ENCODE measurements at regions of chr1 and their contacts with region 1.

Region 1: GRCh38 chr1:209207701-209208286 is 375.7 kb upstream of the CAMK1G start:
- DNase-seq: peak; percentile 45
- ATAC-seq: peak; percentile 97
- H3K4me3 ChIP-seq: no peak overlapping the region
- H3K27ac ChIP-seq: no peak overlapping the region
- H3K4me1 ChIP-seq: no peaks in the 10 kb centered on the region
- H3K27me3 ChIP-seq: peaks cover 13% of the 10 kb centered on the region
- CTCF ChIP-seq: peak; percentile 65
- POLR2A ChIP-seq: no peak
- RAD21 ChIP-seq: peak; percentile 57

Region 2: DNA sequence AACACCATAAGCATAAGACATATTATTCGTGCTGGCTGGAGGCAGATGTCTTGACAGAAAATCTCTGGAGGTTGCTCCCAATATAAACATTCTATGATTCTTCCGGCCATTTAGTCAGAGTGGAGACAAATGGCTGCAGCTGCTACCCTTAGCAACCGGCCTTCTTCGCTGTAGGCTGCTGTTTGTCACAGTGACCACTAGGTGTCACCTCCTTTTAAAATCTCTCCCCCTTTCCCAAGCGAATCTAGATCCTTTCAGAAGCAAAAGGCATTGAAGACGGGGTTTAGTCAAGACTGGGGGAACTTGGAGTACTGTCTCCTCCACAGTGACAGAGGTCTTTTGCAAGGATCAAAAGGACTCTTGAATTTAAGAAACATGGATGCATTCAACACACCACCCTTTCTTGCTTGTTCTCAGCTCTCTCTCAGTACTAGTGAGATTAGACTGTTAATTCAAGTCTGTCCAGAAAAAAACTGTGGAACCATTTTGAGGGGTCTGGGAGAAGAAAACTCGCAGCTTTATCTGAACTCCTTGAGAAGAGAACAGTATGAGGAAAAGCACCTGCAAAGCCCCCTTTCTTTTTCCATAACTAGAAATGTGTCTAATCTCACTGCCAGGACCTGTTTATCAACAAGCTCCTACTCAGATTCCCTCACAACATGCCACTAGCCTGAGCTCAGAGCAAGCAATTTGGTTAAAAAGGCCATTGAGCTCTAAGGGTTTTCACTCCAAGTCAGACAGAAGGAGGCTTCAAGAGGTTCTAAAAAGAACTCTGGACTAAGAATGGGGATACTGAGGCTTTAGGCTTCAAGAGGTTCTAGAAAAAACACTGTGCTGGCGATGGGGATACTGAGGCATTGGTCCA is 555.3 kb before region 1 on chr1:
- CTCF ChIA-PET with region 1: interaction called, 11 read pairs
- POLR2A ChIA-PET with region 1: no interaction called
- dilution Hi-C with region 1: no loop called
- in situ Hi-C with region 1: no loop called
- intact Hi-C with region 1: loop called (anchors 2 kb)
- DNase-seq: peak; percentile 66
- ATAC-seq: peak; percentile 96
- H3K4me3 ChIP-seq: no peak overlapping the region
- H3K27ac ChIP-seq: no peak overlapping the region
- H3K4me1 ChIP-seq: no peaks in the 10 kb centered on the region
- H3K27me3 ChIP-seq: no peaks in the 10 kb centered on the region
- CTCF ChIP-seq: peak; percentile 73
- POLR2A ChIP-seq: no peak
- RAD21 ChIP-seq: peak; percentile 35; the same call in 1 of the 2 replicates

Region 3: DNA sequence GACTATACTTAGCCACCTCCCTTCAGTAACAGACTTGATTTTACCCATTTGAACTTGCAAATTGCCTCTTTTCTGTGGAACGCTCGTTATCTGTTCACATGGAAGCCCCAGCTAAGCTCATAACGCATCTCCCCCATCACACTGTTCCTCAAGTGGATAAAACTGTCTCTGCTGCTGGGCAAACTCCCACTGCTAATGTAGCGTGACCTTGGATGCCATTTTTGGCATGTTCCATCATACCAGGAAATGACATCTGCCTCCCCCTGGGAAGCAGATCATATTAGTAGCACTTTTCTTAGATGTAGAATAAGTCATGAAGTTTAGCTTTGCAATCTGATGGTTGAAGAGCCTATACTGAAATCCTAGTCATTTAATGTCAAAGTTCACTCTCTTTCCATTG is 434.9 kb before region 1 on chr1:
- CTCF ChIA-PET with region 1: no interaction called
- POLR2A ChIA-PET with region 1: no interaction called
- dilution Hi-C with region 1: no loop called
- in situ Hi-C with region 1: no loop called
- intact Hi-C with region 1: no loop called
- DNase-seq: no peak
- ATAC-seq: no peak
- H3K4me3 ChIP-seq: no peak overlapping the region
- H3K27ac ChIP-seq: no peak overlapping the region
- H3K4me1 ChIP-seq: no peaks in the 10 kb centered on the region
- H3K27me3 ChIP-seq: no peaks in the 10 kb centered on the region
- CTCF ChIP-seq: no peak
- POLR2A ChIP-seq: no peak
- RAD21 ChIP-seq: no peak

Region 4: GRCh38 chr1:209076688-209077087 is 131.1 kb before region 1 on chr1:
- CTCF ChIA-PET with region 1: no interaction called
- POLR2A ChIA-PET with region 1: no interaction called
- dilution Hi-C with region 1: no loop called
- in situ Hi-C with region 1: no loop called
- intact Hi-C with region 1: no loop called
- DNase-seq: no peak
- ATAC-seq: no peak
- H3K4me3 ChIP-seq: no peak overlapping the region
- H3K27ac ChIP-seq: no peak overlapping the region
- H3K4me1 ChIP-seq: no peaks in the 10 kb centered on the region
- H3K27me3 ChIP-seq: no peaks in the 10 kb centered on the region
- CTCF ChIP-seq: no peak
- POLR2A ChIP-seq: no peak
- RAD21 ChIP-seq: no peak

Region 5: GRCh38 chr1:209354111-209354839 is 146.5 kb after region 1 on chr1:
- CTCF ChIA-PET with region 1: interaction called, 5 read pairs
- POLR2A ChIA-PET with region 1: no interaction called
- dilution Hi-C with region 1: no loop called
- in situ Hi-C with region 1: no loop called
- intact Hi-C with region 1: loop called (anchors 1 kb)
- DNase-seq: peak; percentile 92
- ATAC-seq: peak; percentile 97
- H3K4me3 ChIP-seq: no peak overlapping the region
- H3K27ac ChIP-seq: no peak overlapping the region
- H3K4me1 ChIP-seq: no peaks in the 10 kb centered on the region
- H3K27me3 ChIP-seq: no peaks in the 10 kb centered on the region
- CTCF ChIP-seq: peak; percentile 84
- POLR2A ChIP-seq: no peak
- RAD21 ChIP-seq: peak; percentile 81

Region 6: DNA sequence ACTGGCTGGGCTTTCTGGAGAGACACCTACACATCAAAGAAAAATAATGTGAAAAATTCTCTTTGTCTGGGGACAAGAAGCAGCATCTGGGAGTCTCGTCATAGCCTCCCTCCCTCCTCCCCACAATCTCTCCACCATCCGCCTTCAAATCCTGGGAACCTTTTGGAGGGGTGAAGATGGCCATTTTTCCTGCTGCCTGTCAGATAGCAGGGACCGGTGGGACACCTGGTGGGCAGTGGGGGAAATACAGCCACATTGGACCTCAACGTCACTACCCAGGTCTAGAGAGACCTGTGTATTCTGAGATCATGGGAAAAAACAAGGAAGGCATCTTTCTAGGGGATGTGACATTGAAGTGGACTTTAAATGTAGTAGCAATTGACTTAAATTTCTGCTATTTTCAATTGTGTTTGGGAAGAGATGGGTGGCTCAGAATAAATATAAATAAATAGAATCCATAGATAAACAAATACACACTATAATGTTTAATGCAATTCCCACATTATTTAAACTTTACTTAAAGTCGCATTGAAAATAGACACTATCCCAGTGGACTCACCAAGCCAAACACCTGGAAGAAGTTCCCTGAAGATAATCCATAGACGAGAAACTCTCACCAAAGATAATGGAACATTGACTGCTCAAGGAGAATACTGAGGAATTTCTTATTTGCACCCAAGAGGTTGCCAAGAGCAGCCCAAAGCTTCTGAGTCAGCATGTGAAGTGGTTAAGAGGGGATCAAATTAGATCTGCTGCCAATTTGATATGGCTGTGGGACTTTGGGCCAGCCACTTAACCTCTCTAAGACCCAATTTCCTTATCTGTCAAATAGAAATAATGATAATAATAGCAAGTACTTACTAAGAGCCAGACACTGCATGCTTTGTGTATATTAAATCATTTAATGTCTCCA is 228.1 kb after region 1 on chr1:
- CTCF ChIA-PET with region 1: interaction called, 5 read pairs
- POLR2A ChIA-PET with region 1: no interaction called
- dilution Hi-C with region 1: no loop called
- in situ Hi-C with region 1: loop called (anchors 10 kb)
- intact Hi-C with region 1: loop called (anchors 1 kb)
- DNase-seq: peak; percentile 77
- ATAC-seq: peak; percentile 100
- H3K4me3 ChIP-seq: no peak overlapping the region
- H3K27ac ChIP-seq: no peak overlapping the region
- H3K4me1 ChIP-seq: 0 out of 2 replicates have a peak, but pooled peaks cover 1% of the 10 kb centered on the region
- H3K27me3 ChIP-seq: peaks cover 5% of the 10 kb centered on the region
- CTCF ChIP-seq: peak; percentile 96
- POLR2A ChIP-seq: no peak
- RAD21 ChIP-seq: peak; percentile 96

Region 7: DNA sequence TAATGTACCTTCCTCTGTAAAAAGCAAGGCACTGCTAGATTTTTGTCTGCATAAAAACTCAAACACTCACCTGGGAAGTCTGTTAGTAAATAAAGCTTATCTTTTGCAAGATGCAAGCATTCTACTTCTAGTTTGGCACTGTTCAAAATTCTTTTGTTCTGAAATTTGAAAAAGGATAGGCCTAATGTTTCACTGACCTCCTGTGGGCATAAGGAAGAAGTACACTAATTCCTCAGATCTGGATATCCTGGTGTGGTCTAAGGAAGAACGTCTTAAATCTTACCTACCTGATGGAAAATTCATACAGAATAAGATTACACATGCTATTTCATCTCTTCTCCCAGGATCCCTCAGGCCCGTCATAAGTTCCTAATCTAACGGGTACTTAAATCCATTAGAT is 282.2 kb after region 1 on chr1:
- CTCF ChIA-PET with region 1: no interaction called
- POLR2A ChIA-PET with region 1: no interaction called
- dilution Hi-C with region 1: no loop called
- in situ Hi-C with region 1: no loop called
- intact Hi-C with region 1: loop called (anchors 1 kb)
- DNase-seq: peak; percentile 25
- ATAC-seq: peak; percentile 56
- H3K4me3 ChIP-seq: no peak overlapping the region
- H3K27ac ChIP-seq: no peak overlapping the region
- H3K4me1 ChIP-seq: no peaks in the 10 kb centered on the region
- H3K27me3 ChIP-seq: peaks cover 2% of the 10 kb centered on the region
- CTCF ChIP-seq: peak; percentile 54
- POLR2A ChIP-seq: no peak
- RAD21 ChIP-seq: peak; percentile 61

Region 8: DNA sequence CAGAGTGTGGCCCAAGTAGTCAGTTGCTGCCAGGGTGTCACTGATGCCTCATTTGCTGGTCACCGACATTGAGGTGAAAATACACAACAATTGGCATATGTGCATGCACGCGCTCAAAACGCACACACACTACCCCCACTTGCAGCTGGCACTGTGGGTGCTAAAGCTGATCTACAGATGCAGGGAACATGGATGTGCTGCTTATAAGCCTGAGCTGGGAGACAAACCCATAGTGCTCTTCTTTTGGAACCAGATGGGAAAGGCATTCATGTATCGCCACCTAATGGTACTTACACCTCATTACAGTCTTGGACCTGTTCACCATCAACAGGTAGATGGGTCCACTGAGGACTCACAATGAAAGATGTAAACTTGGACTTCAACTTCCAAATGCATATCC is 305.4 kb after region 1 on chr1:
- CTCF ChIA-PET with region 1: interaction called, 3 read pairs
- POLR2A ChIA-PET with region 1: no interaction called
- dilution Hi-C with region 1: no loop called
- in situ Hi-C with region 1: no loop called
- intact Hi-C with region 1: loop called (anchors 1 kb)
- DNase-seq: peak; percentile 46
- ATAC-seq: peak; percentile 77
- H3K4me3 ChIP-seq: no peak overlapping the region
- H3K27ac ChIP-seq: no peak overlapping the region
- H3K4me1 ChIP-seq: no peaks in the 10 kb centered on the region
- H3K27me3 ChIP-seq: peaks cover 2% of the 10 kb centered on the region; the same call in 1 of the 2 replicates
- CTCF ChIP-seq: peak; percentile 56
- POLR2A ChIP-seq: no peak
- RAD21 ChIP-seq: peak; percentile 78

Region 9: DNA sequence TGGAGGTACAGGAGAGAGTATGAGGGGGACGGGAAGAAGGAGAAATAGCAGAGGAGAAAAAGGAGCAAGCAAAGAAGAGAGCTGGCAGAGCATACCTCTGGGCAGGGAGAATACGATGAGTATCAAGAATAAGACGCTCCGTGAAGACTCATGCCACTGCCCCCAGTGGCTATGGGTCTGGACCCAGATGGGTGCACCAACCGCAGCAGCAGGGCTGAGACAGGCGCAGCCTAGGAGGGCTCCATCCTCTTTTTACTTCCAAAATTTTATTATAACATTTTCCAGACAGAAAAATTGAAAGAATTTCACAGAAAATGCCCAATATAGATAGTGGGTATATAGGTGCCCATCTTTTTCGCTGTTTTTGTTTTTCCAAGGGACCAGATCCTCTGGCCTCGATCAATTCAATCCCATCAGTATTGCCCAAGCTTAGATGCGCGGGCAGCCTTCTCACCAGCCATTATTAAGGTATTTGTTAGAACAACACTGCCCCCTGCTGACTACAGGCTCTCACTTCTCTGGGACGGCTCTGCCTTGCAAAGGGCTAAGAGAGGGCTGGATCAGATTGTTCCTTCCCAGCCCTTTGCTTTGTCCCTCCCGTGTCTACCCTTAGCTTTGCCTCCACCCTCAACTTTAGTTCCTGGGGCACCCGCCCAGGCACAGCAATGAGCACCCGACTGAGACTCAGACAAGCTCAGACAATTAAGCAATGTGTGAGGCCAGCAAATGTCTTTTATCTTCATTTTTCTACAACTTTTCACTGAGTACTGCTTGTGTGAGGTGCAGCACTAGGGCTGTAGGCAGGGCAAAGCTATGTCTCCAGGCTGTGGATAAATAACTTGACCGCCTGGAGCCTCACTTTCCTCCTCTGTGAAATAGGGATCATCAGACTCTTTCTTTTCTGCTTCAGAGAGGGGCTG is 358.2 kb after region 1 on chr1:
- CTCF ChIA-PET with region 1: interaction called, 5 read pairs
- POLR2A ChIA-PET with region 1: no interaction called
- dilution Hi-C with region 1: no loop called
- in situ Hi-C with region 1: no loop called
- intact Hi-C with region 1: loop called (anchors 2 kb)
- DNase-seq: peak; percentile 75
- ATAC-seq: peak; percentile 98
- H3K4me3 ChIP-seq: no peak overlapping the region
- H3K27ac ChIP-seq: no peak overlapping the region
- H3K4me1 ChIP-seq: no peaks in the 10 kb centered on the region
- H3K27me3 ChIP-seq: peaks cover 19% of the 10 kb centered on the region
- CTCF ChIP-seq: peak; percentile 73
- POLR2A ChIP-seq: no peak
- RAD21 ChIP-seq: peak; percentile 58

Measured in IMR-90 (cell line).